HepG2 (cell line): ENCODE measurements at regions of chr7 and their contacts with region 1.

Region 1: DNA sequence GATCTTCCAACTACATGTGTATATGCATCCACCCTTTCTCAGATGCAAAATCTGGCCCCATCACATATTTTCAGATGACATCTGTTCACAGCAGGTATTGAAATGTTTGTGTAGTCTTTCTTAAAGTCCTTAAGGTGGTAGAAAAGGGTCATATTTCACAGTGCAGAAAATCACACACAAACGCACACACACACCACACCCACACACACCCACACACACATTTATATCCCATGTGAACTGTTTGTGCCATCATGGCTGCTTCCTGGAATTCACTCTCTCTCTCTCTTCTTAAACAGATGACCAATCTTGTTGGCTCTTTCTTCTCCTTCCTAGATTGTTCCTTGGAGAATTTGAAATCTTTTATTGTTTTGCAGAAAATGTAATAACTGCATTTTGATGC is 663.0 kb upstream of the GRM3 start:
- DNase-seq: no peak
- ATAC-seq: no peak
- H3K4me3 ChIP-seq: no peak overlapping the region
- H3K27ac ChIP-seq: no peak overlapping the region
- H3K4me1 ChIP-seq: no peaks in the 10 kb centered on the region
- H3K27me3 ChIP-seq: no peaks in the 10 kb centered on the region
- CTCF ChIP-seq: no peak
- EP300 ChIP-seq: no peak
- POLR2A ChIP-seq: no peak
- RAD21 ChIP-seq: no peak

Region 2: DNA sequence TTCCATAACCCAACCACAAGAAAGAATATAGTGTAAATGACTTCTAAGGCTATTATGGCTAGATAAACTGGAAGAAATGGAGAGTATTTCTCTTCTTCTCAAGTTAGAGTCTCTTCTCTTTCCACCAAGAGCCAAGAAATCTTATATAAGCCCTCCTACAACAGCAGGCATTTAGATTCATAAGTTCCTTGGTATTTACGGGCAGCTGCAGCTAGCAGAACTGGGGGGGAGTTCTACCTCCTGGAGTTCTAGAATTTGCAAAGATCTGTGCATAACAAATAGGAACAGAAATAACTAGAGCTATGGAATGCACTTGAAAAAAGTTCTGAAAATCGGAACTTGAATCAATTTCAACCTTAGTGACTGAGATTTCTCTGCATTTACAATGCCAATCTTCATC is 52.2 kb before region 1 on chr7:
- CTCF ChIA-PET with region 1: no interaction called
- POLR2A ChIA-PET with region 1: no interaction called
- in situ Hi-C with region 1: no loop called
- intact Hi-C with region 1: loop called (anchors 10 kb)
- DNase-seq: no peak
- ATAC-seq: no peak
- H3K4me3 ChIP-seq: no peak overlapping the region
- H3K27ac ChIP-seq: no peak overlapping the region
- H3K4me1 ChIP-seq: no peaks in the 10 kb centered on the region
- H3K27me3 ChIP-seq: no peaks in the 10 kb centered on the region
- CTCF ChIP-seq: no peak
- EP300 ChIP-seq: no peak
- POLR2A ChIP-seq: no peak
- RAD21 ChIP-seq: no peak